MCF 10A (cell line): ENCODE measurements at regions of chr1 and their contacts with region 1.

Region 1: DNA sequence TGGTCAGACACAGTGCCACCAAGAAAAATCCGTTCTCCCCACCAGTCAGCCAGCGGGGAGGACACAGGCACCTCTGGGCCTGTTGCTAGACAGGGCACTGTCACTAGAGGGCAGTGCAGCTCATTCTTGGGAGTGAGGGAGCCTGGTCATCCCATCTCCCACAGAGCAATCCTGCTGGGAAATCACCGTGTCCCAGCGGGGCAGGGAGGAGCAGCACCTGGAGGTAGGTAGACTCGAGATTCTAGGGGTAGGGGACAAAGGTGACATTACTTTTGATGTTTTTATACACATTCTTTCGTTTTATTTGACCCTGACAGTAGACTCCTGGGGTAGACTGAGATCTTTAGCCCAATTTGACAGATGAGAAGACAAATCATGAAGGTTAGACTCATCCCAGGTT is 6.7 kb upstream of the CAMK1G start:
- DNase-seq: peak; percentile 97
- H3K4me3 Mint-ChIP-seq: no peak overlapping the region
- H3K27ac Mint-ChIP-seq: no peak overlapping the region
- H3K4me1 Mint-ChIP-seq: peaks cover 8% of the 10 kb centered on the region
- H3K27me3 Mint-ChIP-seq: peaks cover 19% of the 10 kb centered on the region
- CTCF ChIP-seq: peak; percentile 100

Region 2: DNA sequence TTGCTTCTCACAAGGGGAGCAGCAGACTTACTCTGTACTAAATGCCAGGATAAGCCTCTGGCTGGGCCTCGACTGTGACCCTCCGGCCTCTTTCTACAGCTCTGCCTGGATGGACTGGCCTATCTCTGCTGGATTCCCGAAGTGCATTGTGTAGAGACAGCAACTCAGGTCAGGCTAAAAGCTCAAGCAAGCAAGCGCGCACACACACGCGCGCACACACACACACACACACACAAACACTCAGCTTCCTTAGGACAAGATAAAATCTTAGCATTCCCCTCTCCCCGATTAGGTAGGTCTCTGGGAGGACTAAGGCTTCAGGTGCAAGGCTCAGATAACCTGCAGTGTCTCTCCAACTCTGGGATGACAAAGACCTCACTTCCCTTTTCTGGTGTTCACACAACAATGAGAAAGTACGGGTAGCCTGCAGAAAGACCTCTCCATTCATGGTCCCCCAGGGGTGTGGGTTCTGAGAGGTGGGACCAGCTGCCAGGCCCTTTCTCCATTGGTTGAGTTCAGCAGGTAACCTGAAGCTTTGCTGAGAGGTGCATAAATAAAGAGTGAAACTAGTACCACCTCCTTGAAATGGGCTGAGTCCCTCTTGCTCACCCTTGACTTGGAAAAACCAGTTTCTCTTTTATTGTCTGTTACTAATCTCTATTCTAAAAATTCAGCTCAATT is 148.4 kb before region 1 on chr1:
- CTCF ChIA-PET with region 1: no interaction called
- POLR2A ChIA-PET with region 1: no interaction called
- intact Hi-C with region 1: no loop called
- DNase-seq: peak; percentile 99
- H3K4me3 Mint-ChIP-seq: peak overlapping the region; percentile 93
- H3K27ac Mint-ChIP-seq: peak overlapping the region; percentile 90
- H3K4me1 Mint-ChIP-seq: peaks cover 60% of the 10 kb centered on the region
- H3K27me3 Mint-ChIP-seq: no peaks in the 10 kb centered on the region
- CTCF ChIP-seq: no peak

Region 3: DNA sequence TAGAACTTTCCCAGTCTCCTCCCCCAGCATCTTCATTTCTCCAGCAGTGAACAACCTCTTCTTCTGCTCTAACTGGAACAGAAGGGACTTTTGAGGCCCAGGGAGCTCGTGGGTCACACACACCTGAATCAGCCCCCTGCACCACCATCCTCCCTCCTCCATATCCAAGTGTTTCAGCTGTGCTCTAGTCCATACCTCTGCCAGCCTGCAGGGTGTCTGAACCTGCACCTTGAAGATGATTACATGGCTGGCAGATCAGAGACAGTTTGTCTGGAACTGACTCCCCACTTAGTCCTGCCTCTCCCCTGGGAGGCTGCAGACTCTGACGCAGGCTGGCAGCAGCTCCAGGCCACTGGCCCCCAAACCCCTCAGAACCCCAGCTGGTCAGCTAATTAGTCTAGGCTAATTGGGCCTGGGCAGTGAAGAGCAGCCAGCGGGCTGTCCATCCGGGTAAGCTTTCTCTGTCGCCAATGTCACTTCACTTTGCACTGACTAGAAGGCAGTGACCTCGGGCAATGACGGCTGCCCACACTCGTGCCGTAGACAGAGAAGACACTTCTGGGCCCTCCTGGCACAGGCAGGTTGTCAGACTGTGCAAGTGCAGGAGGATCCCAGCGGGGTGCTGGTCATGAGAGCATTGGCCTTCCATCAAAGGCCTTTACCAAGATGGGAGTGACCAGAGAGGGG is 18.9 kb after region 1 on chr1:
- CTCF ChIA-PET with region 1: interaction called, 394 read pairs
- POLR2A ChIA-PET with region 1: interaction called, 4 read pairs
- intact Hi-C with region 1: no loop called
- DNase-seq: no peak
- H3K4me3 Mint-ChIP-seq: no peak overlapping the region
- H3K27ac Mint-ChIP-seq: no peak overlapping the region
- H3K4me1 Mint-ChIP-seq: peaks cover 6% of the 10 kb centered on the region
- H3K27me3 Mint-ChIP-seq: no peaks in the 10 kb centered on the region
- CTCF ChIP-seq: peak; percentile 6

Region 4: GRCh38 chr1:209627732-209628196 is 51.0 kb after region 1 on chr1:
- CTCF ChIA-PET with region 1: interaction called, 37 read pairs
- POLR2A ChIA-PET with region 1: no interaction called
- intact Hi-C with region 1: loop called (anchors 2 kb)
- DNase-seq: peak; percentile 84
- H3K4me3 Mint-ChIP-seq: no peak overlapping the region
- H3K27ac Mint-ChIP-seq: peak overlapping the region; percentile 11
- H3K4me1 Mint-ChIP-seq: peaks cover 40% of the 10 kb centered on the region
- H3K27me3 Mint-ChIP-seq: no peaks in the 10 kb centered on the region
- CTCF ChIP-seq: peak; percentile 99

Region 5: GRCh38 chr1:209685821-209686220 is 109.0 kb after region 1 on chr1:
- CTCF ChIA-PET with region 1: interaction called, 169 read pairs
- POLR2A ChIA-PET with region 1: no interaction called
- intact Hi-C with region 1: loop called (anchors 1 kb)
- DNase-seq: no peak
- H3K4me3 Mint-ChIP-seq: no peak overlapping the region
- H3K27ac Mint-ChIP-seq: no peak overlapping the region
- H3K4me1 Mint-ChIP-seq: peaks cover 17% of the 10 kb centered on the region
- H3K27me3 Mint-ChIP-seq: no peaks in the 10 kb centered on the region
- CTCF ChIP-seq: no peak

Region 6: GRCh38 chr1:209989525-209989924 is 412.7 kb after region 1 on chr1:
- CTCF ChIA-PET with region 1: interaction called, 3 read pairs
- POLR2A ChIA-PET with region 1: no interaction called
- intact Hi-C with region 1: loop called (anchors 5 kb)
- DNase-seq: peak; percentile 42
- H3K4me3 Mint-ChIP-seq: no peak overlapping the region
- H3K27ac Mint-ChIP-seq: peak overlapping the region; percentile 70
- H3K4me1 Mint-ChIP-seq: peaks cover 16% of the 10 kb centered on the region
- H3K27me3 Mint-ChIP-seq: peaks cover 15% of the 10 kb centered on the region
- CTCF ChIP-seq: peak; percentile 74